Panc1 (cell line): ENCODE measurements at regions of chr3 and their contacts with region 1.

Region 1: DNA sequence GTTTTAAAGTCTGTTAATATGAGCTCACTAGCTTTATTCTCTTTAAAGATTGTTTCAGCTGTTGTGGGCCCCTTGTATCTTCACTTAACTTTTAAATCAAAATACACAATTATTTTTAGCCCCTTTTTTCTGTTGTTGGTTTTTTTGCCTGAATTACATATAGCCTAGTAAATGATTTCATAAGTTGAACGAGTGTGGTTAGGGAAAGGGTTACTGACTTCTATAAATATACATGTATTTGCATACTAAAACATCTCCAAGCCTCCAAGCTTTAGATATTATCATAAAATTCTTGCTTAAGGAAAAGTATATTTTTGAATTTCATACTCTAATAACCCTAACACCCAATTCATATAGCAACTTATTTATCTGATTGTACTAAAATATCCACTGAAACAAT is 73.2 kb upstream of the ARL6 start:
- DNase-seq: no peak
- ATAC-seq: no peak
- H3K4me3 ChIP-seq: no peak overlapping the region
- H3K27ac ChIP-seq: no peak overlapping the region
- H3K4me1 ChIP-seq: no peaks in the 10 kb centered on the region
- H3K27me3 ChIP-seq: no peaks in the 10 kb centered on the region
- CTCF ChIP-seq: no peak

Region 2: DNA sequence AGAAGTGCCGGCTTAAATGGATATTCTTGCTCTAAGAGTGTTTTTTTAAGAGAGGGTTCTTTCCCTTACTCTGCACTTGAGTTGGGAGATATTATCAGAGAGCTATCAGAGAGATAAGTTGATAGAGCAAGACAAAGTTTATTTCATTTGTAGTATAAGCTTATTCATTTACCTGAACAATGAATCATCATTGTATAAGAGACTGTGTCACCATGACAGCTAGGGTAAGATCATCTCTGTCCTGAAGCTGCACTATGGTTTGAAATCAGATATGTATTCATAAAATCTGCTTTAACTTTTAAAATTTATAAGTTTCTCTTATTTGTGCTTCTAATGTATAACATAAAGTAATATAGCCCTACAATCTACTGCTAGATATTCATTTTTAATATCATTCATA is 54.9 kb before region 1 on chr3:
- CTCF ChIA-PET with region 1: no interaction called
- POLR2A ChIA-PET with region 1: no interaction called
- in situ Hi-C with region 1: no loop called
- intact Hi-C with region 1: loop called (anchors 10 kb)
- DNase-seq: no peak
- ATAC-seq: no peak
- H3K4me3 ChIP-seq: no peak overlapping the region
- H3K27ac ChIP-seq: no peak overlapping the region
- H3K4me1 ChIP-seq: no peaks in the 10 kb centered on the region
- H3K27me3 ChIP-seq: no peaks in the 10 kb centered on the region
- CTCF ChIP-seq: no peak